ENCODE measurements at regions of chr5 and their contacts with region 1.

Region 1: GRCh38 chr5:151252762-151253604 is at the start of gene GM2A:
- DNase-seq: peak; percentile 100
- H3K4me3 ChIP-seq: peak within 1 kb of the TSS; percentile 48 to 75 (median 55)
- H3K27ac ChIP-seq: no peak within 1 kb of the TSS
- H3K4me1 ChIP-seq: peaks cover 5% of the 10 kb centered on the region
- H3K27me3 ChIP-seq: no peaks in the 10 kb centered on the region
- CTCF ChIP-seq: no peak
- POLR2A ChIP-seq: peak; percentile 46
- total RNA-seq, gene GM2A: 21.2 and 22.5 TPM in 2 replicates

Region 2: GRCh38 chr5:151223469-151224264 is 29.3 kb before region 1 on chr5 and contains the start of gene CCDC69:
- CTCF ChIA-PET with region 1: interaction called, 3 read pairs
- POLR2A ChIA-PET with region 1: interaction called, 3 read pairs
- dilution Hi-C with region 1: no loop called
- intact Hi-C with region 1: loop called (anchors 1 kb)
- DNase-seq: peak; percentile 82
- H3K4me3 ChIP-seq: peak within 1 kb of the TSS; percentile 57 to 91 (median 70)
- H3K27ac ChIP-seq: no peak within 1 kb of the TSS
- H3K4me1 ChIP-seq: peaks cover 6% of the 10 kb centered on the region
- H3K27me3 ChIP-seq: no peaks in the 10 kb centered on the region
- CTCF ChIP-seq: peak in 1 of 2 donors; percentile 44
- POLR2A ChIP-seq: peak; percentile 60
- total RNA-seq, gene CCDC69: 4.3 and 4.5 TPM in 2 replicates

Region 3: GRCh38 chr5:151264113-151264512 is 11.1 kb after region 1 on chr5:
- CTCF ChIA-PET with region 1: interaction called, 14 read pairs
- POLR2A ChIA-PET with region 1: no interaction called
- dilution Hi-C with region 1: no loop called
- intact Hi-C with region 1: no loop called
- DNase-seq: peak; percentile 20
- H3K4me3 ChIP-seq: no peak overlapping the region
- H3K27ac ChIP-seq: peak overlapping the region; percentile 21
- H3K4me1 ChIP-seq: peaks cover 5% of the 10 kb centered on the region
- H3K27me3 ChIP-seq: no peaks in the 10 kb centered on the region
- CTCF ChIP-seq: no peak
- POLR2A ChIP-seq: no peak